Naive thymus-derived CD4-positive, alpha-beta T cell (primary cell): ENCODE measurements at regions of chr22 and their contacts with region 1.

Region 1: DNA sequence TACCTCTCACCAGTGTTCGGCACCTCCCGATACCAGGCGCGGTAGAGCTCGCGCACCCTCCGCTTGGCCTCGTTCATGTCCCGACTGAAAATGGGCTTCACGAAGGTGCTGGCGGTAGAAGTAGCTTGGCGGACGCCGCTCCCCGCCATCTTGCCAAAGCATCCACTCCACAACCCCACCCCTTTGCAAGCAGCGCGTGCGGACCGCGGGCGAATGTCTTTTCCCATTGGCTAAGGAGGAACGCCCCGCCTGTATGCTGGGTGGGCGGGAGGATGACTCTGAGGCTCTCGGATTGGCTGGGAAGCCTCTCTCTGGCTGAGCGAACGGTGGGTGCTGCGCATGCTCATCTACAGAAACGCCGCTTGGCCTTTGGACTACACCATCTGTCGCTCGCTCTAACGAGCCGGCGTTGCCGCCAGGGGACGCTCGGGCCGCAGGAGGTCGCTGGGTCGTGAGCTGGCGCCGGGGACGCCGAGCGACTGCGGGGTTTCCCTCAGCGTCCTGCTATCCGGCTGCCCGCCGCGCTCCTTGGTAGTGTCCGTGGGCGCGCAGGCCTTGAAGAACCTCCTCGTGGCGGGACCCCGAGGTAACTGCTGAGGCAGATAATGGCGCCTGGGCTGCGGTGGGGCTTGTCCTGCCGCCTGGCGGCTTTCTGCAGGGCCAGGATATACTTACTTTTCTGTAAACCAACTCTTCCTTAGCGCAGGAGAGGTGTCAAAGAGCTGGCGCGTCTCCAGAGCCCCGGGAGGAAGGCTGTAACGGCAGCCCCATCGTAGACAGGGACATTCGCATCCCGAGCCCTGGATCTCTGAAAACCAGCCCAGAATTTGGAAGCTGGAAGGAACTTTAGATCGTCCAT is at the start of gene NDUFA6:
- DNase-seq: peak; percentile 92 to 99 (median 98)
- ATAC-seq: peak; percentile 93
- H3K4me3 ChIP-seq: peak within 1 kb of the TSS; percentile 96
- H3K4me3 Mint-ChIP-seq: peak within 1 kb of the TSS; percentile 94 to 99 (median 98)
- H3K27ac ChIP-seq: peak within 1 kb of the TSS; percentile 96
- H3K27ac Mint-ChIP-seq: peak within 1 kb of the TSS; percentile 92 to 100 (median 99)
- H3K4me1 ChIP-seq: peaks cover 15 to 22% of the 10 kb centered on the region in 2 donors
- H3K4me1 Mint-ChIP-seq: peaks cover 14 to 56% (median 36%) of the 10 kb centered on the region in 7 donors
- H3K27me3 ChIP-seq: no peaks in the 10 kb centered on the region
- H3K27me3 Mint-ChIP-seq: no peaks in the 10 kb centered on the region
- total RNA-seq, gene NDUFA6: 35.0 to 66.4 (median 40.6) TPM

Region 2: DNA sequence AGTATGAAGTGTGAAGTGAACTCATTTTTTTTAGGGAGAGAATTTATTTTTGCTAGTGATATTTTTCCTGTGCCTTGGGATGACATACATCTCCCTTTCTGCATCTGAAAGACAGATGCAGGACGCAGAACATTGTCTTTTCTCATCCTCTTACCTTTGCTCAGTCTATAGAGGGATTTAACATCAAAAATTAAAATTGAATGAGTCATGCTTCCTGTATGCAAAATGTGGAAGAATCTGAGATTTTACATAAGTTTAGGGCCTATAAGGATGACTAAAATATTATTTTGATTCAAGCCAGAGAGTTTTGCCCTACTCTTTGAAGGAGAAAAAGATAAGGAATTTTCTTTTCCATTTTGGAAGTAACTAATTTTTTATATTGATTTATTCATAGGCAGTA is 442.4 kb before region 1 on chr22:
- CTCF ChIA-PET with region 1: no interaction called
- POLR2A ChIA-PET with region 1: no interaction called
- intact Hi-C with region 1: no loop called
- DNase-seq: no peak
- ATAC-seq: no peak
- H3K4me3 ChIP-seq: no peak overlapping the region
- H3K4me3 Mint-ChIP-seq: no peak overlapping the region
- H3K27ac ChIP-seq: no peak overlapping the region
- H3K27ac Mint-ChIP-seq: peak overlapping the region in 3 of 9 donors; percentile 28 to 54 (median 48)
- H3K4me1 ChIP-seq: no peaks in the 10 kb centered on the region
- H3K4me1 Mint-ChIP-seq: peaks cover 0 to 10% (median 7%) of the 10 kb centered on the region in 7 donors
- H3K27me3 ChIP-seq: no peaks in the 10 kb centered on the region
- H3K27me3 Mint-ChIP-seq: no peaks in the 10 kb centered on the region

Region 3: DNA sequence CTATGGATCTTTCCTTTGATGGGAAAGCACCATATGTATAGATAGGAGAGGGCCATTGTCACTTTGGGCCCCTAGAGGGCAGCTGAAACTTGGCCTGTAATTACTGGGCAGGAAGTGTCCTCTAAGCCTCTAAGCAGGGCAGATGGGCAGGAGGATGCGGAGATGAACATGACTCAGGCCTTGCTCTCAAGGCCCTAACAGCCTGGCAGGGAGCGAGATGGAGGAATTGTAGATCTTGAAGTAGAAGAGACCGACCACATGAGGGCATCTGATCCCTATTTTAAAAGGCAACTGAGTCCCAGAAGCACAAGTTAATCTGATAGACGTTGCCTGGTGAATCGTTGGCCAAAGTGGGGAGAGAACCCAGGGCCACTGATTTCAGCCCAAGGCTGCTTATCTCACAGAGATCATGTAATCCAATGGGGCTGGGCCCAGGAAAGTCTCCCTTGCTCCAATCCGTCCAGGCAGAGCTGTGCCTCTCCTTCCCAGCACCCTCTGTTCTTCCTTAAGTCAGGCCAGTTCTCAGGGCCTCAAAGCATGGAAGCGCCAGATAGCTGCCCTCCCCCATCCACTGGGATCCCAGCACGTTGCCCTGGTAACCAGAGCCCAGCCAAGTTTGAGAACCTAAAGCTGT is 124.1 kb before region 1 on chr22:
- CTCF ChIA-PET with region 1: interaction called, 3 read pairs
- POLR2A ChIA-PET with region 1: interaction called, 3 read pairs
- intact Hi-C with region 1: loop called (anchors 1 kb)
- DNase-seq: peak in 6 of 9 donors; percentile 20 to 59 (median 48)
- ATAC-seq: peak; percentile 84
- H3K4me3 ChIP-seq: no peak overlapping the region
- H3K4me3 Mint-ChIP-seq: no peak overlapping the region
- H3K27ac ChIP-seq: no peak overlapping the region
- H3K27ac Mint-ChIP-seq: peak overlapping the region in 1 of 9 donors; percentile 72
- H3K4me1 ChIP-seq: no peaks in the 10 kb centered on the region
- H3K4me1 Mint-ChIP-seq: peaks cover 0 to 9% (median 0%) of the 10 kb centered on the region in 7 donors
- H3K27me3 ChIP-seq: no peaks in the 10 kb centered on the region
- H3K27me3 Mint-ChIP-seq: peaks cover 0 to 9% (median 0%) of the 10 kb centered on the region in 5 donors

Region 4: GRCh38 chr22:42079319-42080251 is 11.2 kb before region 1 on chr22 and contains the start of gene SMDT1:
- CTCF ChIA-PET with region 1: interaction called, 6 read pairs
- POLR2A ChIA-PET with region 1: interaction called, 136 read pairs
- intact Hi-C with region 1: loop called (anchors 1 kb)
- DNase-seq: peak; percentile 96 to 100 (median 99)
- ATAC-seq: peak; percentile 94
- H3K4me3 ChIP-seq: peak within 1 kb of the TSS; percentile 98
- H3K4me3 Mint-ChIP-seq: peak within 1 kb of the TSS; percentile 94 to 99 (median 96)
- H3K27ac ChIP-seq: peak within 1 kb of the TSS; percentile 97
- H3K27ac Mint-ChIP-seq: peak within 1 kb of the TSS; percentile 96 to 99 (median 99)
- H3K4me1 ChIP-seq: peaks cover 10 to 16% of the 10 kb centered on the region in 2 donors
- H3K4me1 Mint-ChIP-seq: peaks cover 9 to 52% (median 43%) of the 10 kb centered on the region in 7 donors
- H3K27me3 ChIP-seq: no peaks in the 10 kb centered on the region
- H3K27me3 Mint-ChIP-seq: no peaks in the 10 kb centered on the region
- total RNA-seq, gene SMDT1: 40.4 to 105 (median 98.8) TPM

Region 5: GRCh38 chr22:42180349-42180842 is 89.6 kb after region 1 on chr22:
- CTCF ChIA-PET with region 1: no interaction called
- POLR2A ChIA-PET with region 1: no interaction called
- intact Hi-C with region 1: loop called in 1 of 2 experiments (anchors 5 kb)
- DNase-seq: peak in 7 of 9 donors; percentile 59 to 78 (median 71)
- ATAC-seq: peak; percentile 97
- H3K4me3 ChIP-seq: no peak overlapping the region
- H3K4me3 Mint-ChIP-seq: peak overlapping the region; percentile 19 to 73 (median 57)
- H3K27ac ChIP-seq: peak overlapping the region; percentile 52
- H3K27ac Mint-ChIP-seq: peak overlapping the region; percentile 55 to 90 (median 79)
- H3K4me1 ChIP-seq: peaks cover 25 to 38% of the 10 kb centered on the region in 2 donors
- H3K4me1 Mint-ChIP-seq: peaks cover 50 to 86% (median 75%) of the 10 kb centered on the region in 7 donors
- H3K27me3 ChIP-seq: no peaks in the 10 kb centered on the region
- H3K27me3 Mint-ChIP-seq: no peaks in the 10 kb centered on the region

Region 6: DNA sequence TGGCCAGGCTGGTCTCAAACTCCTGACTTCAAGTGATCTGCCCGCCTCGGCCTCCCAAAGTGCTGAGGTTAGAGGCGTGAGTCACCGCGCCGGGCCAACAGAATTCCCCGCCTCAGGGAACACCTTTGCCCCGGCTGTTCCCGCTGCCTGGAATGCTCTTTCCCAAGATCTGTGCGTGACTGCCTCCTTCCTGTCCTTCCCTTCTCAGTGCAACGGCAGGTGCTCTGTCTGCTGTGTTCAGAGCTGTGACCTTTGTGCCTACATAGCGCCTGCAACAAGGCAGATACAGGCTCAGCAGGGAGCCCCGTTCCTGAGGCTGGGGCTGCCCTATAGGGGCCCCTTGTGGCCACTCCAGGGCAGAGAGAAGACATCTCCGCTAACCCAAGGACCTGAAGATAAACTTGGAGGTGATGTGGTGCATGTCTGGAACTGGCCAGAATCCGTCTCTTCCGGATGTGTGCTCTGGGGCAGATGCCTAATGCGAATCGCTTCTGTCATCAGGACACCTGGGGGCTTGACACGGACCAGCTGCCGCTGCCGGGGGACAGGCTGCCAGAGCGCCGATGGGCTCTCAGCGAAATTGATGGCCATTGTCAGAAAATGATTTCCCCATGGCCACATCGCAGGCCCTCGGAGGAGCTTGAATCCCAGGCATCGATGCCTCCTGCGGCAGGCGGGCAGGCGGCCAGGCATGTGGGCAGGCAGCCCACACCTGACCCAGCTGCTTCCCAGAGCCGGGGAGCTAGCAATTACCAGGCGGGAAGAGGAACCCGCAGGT is 223.2 kb after region 1 on chr22:
- CTCF ChIA-PET with region 1: interaction called, 8 read pairs
- POLR2A ChIA-PET with region 1: interaction called, 3 read pairs
- intact Hi-C with region 1: loop called (anchors 1 kb)
- DNase-seq: peak in 8 of 9 donors; percentile 34 to 73 (median 60)
- ATAC-seq: peak; percentile 75
- H3K4me3 ChIP-seq: no peak overlapping the region
- H3K4me3 Mint-ChIP-seq: peak overlapping the region in 9 of 10 donors; percentile 21 to 76 (median 68)
- H3K27ac ChIP-seq: no peak overlapping the region
- H3K27ac Mint-ChIP-seq: peak overlapping the region in 8 of 9 donors; percentile 43 to 95 (median 88)
- H3K4me1 ChIP-seq: peaks cover 23 to 46% of the 10 kb centered on the region in 2 donors
- H3K4me1 Mint-ChIP-seq: peaks cover 28 to 62% (median 52%) of the 10 kb centered on the region in 7 donors
- H3K27me3 ChIP-seq: no peaks in the 10 kb centered on the region
- H3K27me3 Mint-ChIP-seq: no peaks in the 10 kb centered on the region

Region 7: DNA sequence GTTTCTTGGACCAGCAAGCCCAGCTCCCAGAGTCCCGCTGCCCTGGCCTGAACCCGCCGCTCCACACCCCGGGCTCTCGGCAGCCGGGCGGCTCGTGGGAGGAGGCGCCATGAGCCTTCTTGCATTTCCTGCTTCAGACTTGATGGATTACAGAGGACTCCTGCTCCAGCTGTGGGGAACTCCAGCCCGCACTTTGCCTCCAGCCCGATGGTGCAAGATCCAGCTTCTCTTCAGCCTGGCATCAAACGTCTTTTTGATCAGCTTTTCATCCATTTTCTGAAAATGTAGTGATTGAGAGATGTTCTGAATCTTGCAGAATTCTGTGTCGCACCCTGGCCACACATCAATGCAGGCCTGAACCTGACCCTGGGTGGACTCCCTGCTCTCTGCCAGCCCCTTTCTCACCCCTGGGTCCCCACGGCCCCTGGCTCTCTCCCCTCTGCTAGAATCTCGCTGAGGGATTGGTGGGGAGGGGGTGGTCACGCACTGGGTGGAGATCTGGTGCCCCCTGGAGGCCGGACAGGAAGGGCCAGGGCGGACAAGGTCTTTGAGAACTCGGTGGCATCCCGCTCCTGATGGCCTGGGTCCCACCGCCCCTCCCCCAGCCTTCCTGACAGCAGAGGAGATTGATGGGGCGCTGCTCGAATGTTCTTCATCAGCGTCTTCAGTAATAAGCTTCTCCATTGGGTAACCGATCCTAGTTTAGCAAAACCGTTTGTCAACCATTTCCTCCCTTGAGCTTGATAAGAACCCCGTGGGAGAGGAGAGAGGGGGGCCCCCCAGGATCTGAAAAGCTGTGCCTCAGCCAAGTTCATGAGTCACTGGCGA is 353.5 kb after region 1 on chr22:
- CTCF ChIA-PET with region 1: interaction called, 19 read pairs
- POLR2A ChIA-PET with region 1: interaction called, 20 read pairs
- intact Hi-C with region 1: loop called (anchors 1 to 2 kb)
- DNase-seq: peak; percentile 61 to 88 (median 82)
- ATAC-seq: peak; percentile 92
- H3K4me3 ChIP-seq: peak overlapping the region; percentile 68
- H3K4me3 Mint-ChIP-seq: peak overlapping the region; percentile 77 to 94 (median 84)
- H3K27ac ChIP-seq: peak overlapping the region; percentile 71
- H3K27ac Mint-ChIP-seq: peak overlapping the region; percentile 88 to 98 (median 94)
- H3K4me1 ChIP-seq: peaks cover 15% of the 10 kb centered on the region in 2 donors
- H3K4me1 Mint-ChIP-seq: peaks cover 9 to 34% (median 26%) of the 10 kb centered on the region in 7 donors
- H3K27me3 ChIP-seq: no peaks in the 10 kb centered on the region
- H3K27me3 Mint-ChIP-seq: peaks cover 0 to 3% (median 0%) of the 10 kb centered on the region in 5 donors

Region 8: DNA sequence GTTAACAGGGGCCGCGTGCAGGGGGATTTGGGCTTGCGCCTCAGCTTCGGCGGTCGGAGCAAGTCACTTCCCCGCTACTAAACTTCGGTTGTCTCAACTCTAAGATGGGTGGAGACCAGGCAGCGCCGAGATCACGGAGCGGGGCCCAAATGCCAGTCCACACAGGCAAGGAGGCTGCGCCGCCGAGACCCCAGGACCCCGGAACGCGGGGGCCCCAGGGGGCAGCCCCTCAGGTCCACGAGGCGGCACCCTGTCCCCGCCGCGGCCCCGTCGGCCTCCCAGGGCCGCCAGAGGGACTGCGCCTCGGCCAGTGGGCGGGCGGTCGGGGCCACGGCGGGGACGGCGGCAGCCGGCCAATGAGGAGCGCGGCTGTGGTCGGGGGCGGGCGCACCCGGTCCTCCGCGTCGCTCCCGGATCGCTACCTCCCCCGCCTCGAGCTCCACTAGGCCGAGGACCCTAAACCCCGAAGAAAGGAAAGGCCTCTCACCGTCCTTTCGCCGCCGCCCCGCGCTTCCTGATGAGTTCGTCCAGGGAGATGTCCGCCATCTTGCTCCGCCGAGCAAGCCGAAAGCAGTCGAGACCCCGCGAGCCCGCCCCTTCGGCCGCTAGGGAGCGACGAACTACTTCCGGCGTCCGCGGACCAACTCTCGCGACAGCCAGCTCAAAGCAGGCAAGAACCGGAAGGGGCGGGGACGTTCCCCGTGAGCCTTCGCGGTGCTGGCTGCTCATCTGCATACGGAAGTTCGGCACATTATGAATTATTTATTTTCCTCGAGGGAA is 523.7 kb after region 1 on chr22 and contains the start of gene POLDIP3:
- CTCF ChIA-PET with region 1: no interaction called
- POLR2A ChIA-PET with region 1: interaction called, 6 read pairs
- intact Hi-C with region 1: loop called (anchors 1 to 2 kb)
- DNase-seq: peak; percentile 96 to 99 (median 98)
- ATAC-seq: peak; percentile 84
- H3K4me3 ChIP-seq: peak within 1 kb of the TSS; percentile 91
- H3K4me3 Mint-ChIP-seq: peak within 1 kb of the TSS; percentile 92 to 99 (median 97)
- H3K27ac ChIP-seq: peak within 1 kb of the TSS; percentile 91
- H3K27ac Mint-ChIP-seq: peak within 1 kb of the TSS; percentile 98 to 100 (median 100)
- H3K4me1 ChIP-seq: peaks cover 34 to 40% of the 10 kb centered on the region in 2 donors
- H3K4me1 Mint-ChIP-seq: peaks cover 46 to 65% (median 54%) of the 10 kb centered on the region in 7 donors
- H3K27me3 ChIP-seq: no peaks in the 10 kb centered on the region
- H3K27me3 Mint-ChIP-seq: peaks cover 0 to 5% (median 0%) of the 10 kb centered on the region in 5 donors
- total RNA-seq, gene POLDIP3: 62.5 to 86.7 (median 75.2) TPM